ENCODE measurements at regions of chr5 and their contacts with region 1.

Region 1: DNA sequence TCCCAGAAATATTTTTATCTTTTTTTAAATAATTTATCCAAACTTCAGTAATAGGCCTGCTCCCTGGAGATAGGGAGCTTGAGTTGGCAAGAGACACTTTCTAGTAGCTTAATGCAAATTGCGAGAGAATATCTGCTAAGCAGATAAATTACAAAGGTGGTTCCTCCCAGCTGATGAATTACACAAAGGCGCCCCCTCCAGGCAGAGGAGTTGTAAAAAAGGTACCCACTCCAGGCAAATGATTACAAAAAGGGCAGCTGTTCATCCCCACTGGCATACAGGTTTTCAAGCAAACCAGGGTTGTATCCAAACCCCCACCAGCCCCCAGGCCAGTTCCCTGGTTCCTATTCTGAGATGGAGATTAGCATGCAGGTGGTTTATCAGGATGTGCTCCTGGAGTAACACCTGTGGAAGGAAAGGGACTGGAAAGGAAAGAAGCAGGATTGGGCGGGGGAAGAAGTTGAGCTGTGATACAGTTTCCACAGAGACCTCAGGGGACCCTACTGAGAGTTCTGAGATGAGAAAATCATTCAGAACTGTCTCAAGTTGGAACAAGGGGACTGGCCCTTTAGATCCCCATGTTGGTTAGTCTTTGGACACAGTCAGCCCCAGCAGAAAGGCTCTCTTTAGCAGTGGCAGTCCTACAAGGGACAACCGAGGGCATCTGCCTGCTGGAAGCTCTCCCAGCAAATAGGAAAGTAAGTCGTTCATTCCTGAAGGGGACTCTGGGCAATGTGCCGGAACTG is 25.5 kb downstream of the ESM1 start:
- DNase-seq: peak; percentile 4
- ATAC-seq: peak; percentile 79
- H3K4me3 ChIP-seq: no peak overlapping the region
- H3K27ac ChIP-seq: no peak overlapping the region
- H3K4me1 ChIP-seq: no peaks in the 10 kb centered on the region
- H3K27me3 ChIP-seq: peaks cover 31% of the 10 kb centered on the region
- CTCF ChIP-seq: peak; percentile 24 to 68 (median 59); a peak in 5 of 6 replicates
- POLR2A ChIP-seq: no peak
- RAD21 ChIP-seq: peak; percentile 47

Region 2: GRCh38 chr5:54905943-54906537 is 53.8 kb before region 1 on chr5:
- CTCF ChIA-PET with region 1: interaction called, 14 read pairs
- POLR2A ChIA-PET with region 1: no interaction called
- RAD21 ChIA-PET with region 1: interaction called in 1 of 2 experiments, 3 read pairs
- intact Hi-C with region 1: no loop called
- DNase-seq: peak; percentile 44
- ATAC-seq: peak; percentile 62
- H3K4me3 ChIP-seq: no peak overlapping the region
- H3K27ac ChIP-seq: no peak overlapping the region
- H3K4me1 ChIP-seq: no peaks in the 10 kb centered on the region
- H3K27me3 ChIP-seq: peaks cover 69% of the 10 kb centered on the region
- CTCF ChIP-seq: peak; percentile 55 to 79 (median 75)
- POLR2A ChIP-seq: no peak
- RAD21 ChIP-seq: peak; percentile 77

Region 3: DNA sequence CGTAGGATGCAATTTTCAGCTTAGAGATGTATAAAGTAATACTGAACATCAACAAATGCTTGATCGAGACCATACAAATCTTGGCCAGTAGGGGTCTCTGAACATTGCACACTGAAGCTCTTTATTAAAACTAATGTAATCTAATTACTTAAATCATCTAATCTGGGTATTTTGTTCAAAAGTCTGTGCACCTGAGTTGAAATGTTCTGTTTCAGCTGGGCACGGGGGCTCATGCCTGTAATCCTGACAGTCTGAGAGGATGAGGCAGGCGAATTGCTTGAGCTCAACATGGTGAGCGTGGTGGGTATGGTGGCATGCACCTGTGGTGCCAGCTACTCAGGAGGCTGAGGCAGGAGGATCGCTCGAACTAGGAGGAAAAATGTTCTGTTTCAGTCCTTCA is 15.5 kb before region 1 on chr5:
- CTCF ChIA-PET with region 1: interaction called, 74 read pairs
- POLR2A ChIA-PET with region 1: no interaction called
- RAD21 ChIA-PET with region 1: no interaction called
- intact Hi-C with region 1: no loop called
- DNase-seq: peak; percentile 12
- ATAC-seq: peak; percentile 73
- H3K4me3 ChIP-seq: no peak overlapping the region
- H3K27ac ChIP-seq: no peak overlapping the region
- H3K4me1 ChIP-seq: no peaks in the 10 kb centered on the region
- H3K27me3 ChIP-seq: peaks cover 7% of the 10 kb centered on the region; the same call in 1 of the 2 replicates
- CTCF ChIP-seq: peak; percentile 38 to 74 (median 59); a peak in 5 of 6 replicates
- POLR2A ChIP-seq: no peak
- RAD21 ChIP-seq: peak; percentile 46

Region 4: DNA sequence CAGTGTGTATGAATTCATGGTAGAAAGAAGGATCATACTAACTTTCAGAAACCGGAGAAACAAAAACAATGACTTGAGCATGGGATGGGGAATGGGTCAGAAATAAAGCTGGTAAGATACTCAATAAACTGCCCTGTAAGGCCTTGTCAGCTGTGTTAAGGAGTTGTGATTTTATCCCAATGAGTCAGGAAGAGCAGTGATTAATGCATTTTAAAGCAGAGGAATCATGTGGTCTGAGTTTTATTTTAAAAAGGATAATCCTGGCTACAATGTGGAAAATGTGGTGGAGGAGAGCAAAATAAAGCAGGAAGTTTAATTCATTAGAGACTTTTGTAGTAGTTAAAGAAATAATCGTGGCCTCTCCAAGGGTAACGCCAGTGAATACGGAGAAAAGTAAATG is 318.9 kb after region 1 on chr5:
- CTCF ChIA-PET with region 1: no interaction called
- POLR2A ChIA-PET with region 1: no interaction called
- RAD21 ChIA-PET with region 1: no interaction called
- intact Hi-C with region 1: no loop called
- DNase-seq: no peak
- ATAC-seq: no peak
- H3K4me3 ChIP-seq: no peak overlapping the region
- H3K27ac ChIP-seq: no peak overlapping the region
- H3K4me1 ChIP-seq: no peaks in the 10 kb centered on the region
- H3K27me3 ChIP-seq: no peaks in the 10 kb centered on the region
- CTCF ChIP-seq: no peak
- POLR2A ChIP-seq: no peak
- RAD21 ChIP-seq: no peak

Region 5: DNA sequence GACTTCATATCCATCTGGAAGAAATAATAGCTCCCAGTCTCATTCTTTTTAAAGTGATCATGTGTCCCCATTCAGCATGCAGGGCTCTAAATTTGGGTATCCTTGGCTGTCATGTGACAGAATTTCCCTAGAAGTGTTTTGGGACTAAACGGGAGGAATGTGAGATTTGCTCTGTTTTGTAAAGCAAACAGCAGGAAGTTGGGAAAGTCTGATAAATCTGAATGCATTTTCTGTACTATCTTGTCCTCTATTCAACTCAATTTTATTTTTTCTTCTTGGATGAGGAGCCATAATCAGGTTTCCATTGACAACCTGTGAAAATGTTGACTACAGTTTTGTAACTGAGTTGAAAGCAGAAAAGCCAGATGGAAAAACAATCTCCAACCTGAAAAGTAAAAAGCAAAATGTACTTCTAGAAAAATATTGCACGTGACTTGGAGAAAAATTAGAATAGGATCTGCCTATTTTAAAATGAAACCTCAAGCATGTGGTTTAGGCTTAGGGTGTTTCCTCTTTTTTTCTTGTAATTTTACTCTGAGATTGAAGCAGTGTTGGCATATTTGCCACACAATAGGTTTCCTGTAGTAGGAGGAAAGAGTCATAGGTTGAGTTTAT is 1111.1 kb after region 1 on chr5:
- CTCF ChIA-PET with region 1: no interaction called
- POLR2A ChIA-PET with region 1: no interaction called
- RAD21 ChIA-PET with region 1: no interaction called
- intact Hi-C with region 1: no loop called
- DNase-seq: no peak
- ATAC-seq: no peak
- H3K4me3 ChIP-seq: no peak overlapping the region
- H3K27ac ChIP-seq: no peak overlapping the region
- H3K4me1 ChIP-seq: no peaks in the 10 kb centered on the region
- H3K27me3 ChIP-seq: no peaks in the 10 kb centered on the region
- CTCF ChIP-seq: no peak
- POLR2A ChIP-seq: no peak
- RAD21 ChIP-seq: no peak

Measured in HCT116 (cell line).